ENCODE measurements at regions of chr10 and their contacts with region 1.

Region 1: DNA sequence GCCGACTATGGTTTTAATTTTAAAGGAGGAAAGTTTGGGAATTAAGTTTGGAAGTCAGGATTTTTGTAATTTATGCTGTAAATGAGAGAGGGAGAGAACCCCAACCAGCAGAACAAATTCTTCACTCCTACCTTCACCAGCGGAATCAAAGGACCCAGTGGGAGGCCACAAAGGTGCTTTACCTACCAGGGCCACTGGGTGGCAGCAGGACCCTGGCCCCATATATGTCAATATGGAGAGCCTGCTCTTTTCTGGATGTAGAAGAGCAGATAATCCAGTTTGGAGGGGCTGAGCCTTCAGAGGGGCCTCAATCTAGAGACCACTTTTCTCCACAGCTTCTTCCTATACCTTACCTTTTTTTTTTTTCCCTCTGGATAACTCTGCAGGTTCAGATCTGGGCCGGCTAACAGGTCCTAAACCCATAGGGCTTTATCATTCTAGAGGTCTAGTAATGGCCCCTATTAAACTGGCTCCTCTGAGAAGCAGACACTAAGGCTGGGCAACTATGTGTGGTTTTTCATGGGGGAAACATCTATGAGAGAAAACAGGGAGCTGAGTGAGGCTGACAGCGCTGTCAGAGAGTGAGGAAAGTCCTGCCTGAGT is 8.5 kb upstream of the SCD start:
- DNase-seq: peak; percentile 88
- ATAC-seq: peak; percentile 90
- H3K4me3 Mint-ChIP-seq: no peak overlapping the region
- H3K27ac Mint-ChIP-seq: peak overlapping the region; percentile 60
- H3K4me1 Mint-ChIP-seq: peaks cover 29% of the 10 kb centered on the region
- H3K27me3 Mint-ChIP-seq: peaks cover 9% of the 10 kb centered on the region

Region 2: DNA sequence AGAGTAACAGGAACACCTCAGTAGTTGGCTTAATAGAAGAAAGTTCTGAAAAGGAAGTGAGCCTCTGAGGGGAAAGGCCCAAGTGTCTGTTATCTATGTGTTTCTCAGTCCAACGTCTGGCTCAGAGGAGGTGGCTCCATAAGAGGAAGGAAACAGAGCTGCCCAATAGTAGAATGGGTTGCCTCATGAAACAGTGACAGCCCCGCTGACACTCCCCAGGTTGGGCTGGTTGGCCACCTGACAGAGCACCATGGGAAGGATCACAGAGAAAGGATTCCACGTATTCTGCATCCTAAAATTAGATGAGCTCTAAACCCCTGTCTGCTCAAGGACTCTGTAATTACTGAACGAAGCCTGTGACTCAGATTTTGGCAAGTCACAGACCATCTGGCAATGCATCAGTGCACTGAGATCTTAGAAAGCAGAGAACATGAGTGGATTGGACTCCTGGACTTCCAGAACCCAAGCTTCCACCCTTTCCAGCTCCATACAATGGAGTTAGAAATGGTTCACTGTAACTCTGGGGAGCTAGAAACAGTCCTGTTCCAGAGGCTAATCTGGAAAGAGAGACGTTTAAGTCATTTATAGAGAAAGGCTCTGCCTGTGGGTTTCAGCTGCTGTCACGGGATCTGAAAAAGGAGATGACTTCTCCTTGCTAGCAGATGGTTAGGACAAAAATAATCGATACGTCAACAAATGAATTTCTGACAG is 11.4 kb before region 1 on chr10:
- CTCF ChIA-PET with region 1: interaction called, 34 read pairs
- POLR2A ChIA-PET with region 1: interaction called, 5 read pairs
- DNase-seq: peak; percentile 58
- ATAC-seq: peak; percentile 91
- H3K4me3 Mint-ChIP-seq: no peak overlapping the region
- H3K27ac Mint-ChIP-seq: peak overlapping the region; percentile 72
- H3K4me1 Mint-ChIP-seq: peaks cover 13% of the 10 kb centered on the region
- H3K27me3 Mint-ChIP-seq: peaks cover 13% of the 10 kb centered on the region

Region 3: DNA sequence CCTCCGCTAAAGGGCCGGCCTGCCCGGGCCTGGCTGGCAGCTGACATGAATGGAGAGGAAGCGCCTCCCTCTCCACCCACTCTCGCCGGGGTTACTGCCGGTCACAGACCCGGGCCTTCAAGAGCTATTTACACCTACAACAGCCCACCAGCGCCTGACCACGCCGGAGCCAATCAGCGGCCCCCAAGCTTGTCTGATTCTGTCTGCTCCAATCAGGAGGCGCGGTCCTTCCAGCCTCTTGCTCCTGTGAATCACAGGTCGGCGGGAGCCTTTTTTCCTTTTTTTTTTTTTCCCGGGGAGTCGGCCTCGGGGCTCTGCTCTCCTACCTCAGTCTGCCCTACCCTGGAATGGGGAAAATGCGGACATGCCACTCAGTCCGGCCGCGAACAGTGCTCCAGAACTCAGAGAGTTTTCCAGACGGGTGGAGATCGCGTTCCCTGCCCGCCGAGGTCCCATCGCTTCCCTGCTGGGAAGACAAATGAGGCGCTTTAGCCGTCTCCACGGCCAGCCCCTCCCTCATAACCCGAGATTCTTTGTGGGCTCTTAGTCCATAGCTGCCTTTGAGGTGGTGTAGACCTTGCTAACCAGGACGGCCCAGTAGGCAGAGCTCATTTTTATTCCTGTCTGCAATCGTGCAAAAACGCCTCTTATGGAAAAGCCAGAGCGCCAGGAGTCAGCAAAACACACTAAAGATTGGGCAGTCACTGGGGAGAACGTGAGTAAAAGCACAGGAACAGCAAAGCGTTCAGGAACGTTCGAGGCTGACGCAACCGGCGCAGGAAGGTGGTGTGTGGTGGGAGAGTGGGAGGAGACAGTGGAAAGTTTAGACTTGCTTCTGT is 35.0 kb after region 1 on chr10:
- CTCF ChIA-PET with region 1: interaction called, 12 read pairs
- POLR2A ChIA-PET with region 1: interaction called, 8 read pairs
- DNase-seq: peak; percentile 96
- ATAC-seq: peak; percentile 83
- H3K4me3 Mint-ChIP-seq: no peak overlapping the region
- H3K27ac Mint-ChIP-seq: no peak overlapping the region
- H3K4me1 Mint-ChIP-seq: peaks cover 50% of the 10 kb centered on the region
- H3K27me3 Mint-ChIP-seq: no peaks in the 10 kb centered on the region

Region 4: GRCh38 chr10:100438674-100439315 is 100.3 kb after region 1 on chr10:
- CTCF ChIA-PET with region 1: interaction called, 311 read pairs
- POLR2A ChIA-PET with region 1: no interaction called
- DNase-seq: no peak
- ATAC-seq: no peak
- H3K4me3 Mint-ChIP-seq: no peak overlapping the region
- H3K27ac Mint-ChIP-seq: no peak overlapping the region
- H3K4me1 Mint-ChIP-seq: peaks cover 4% of the 10 kb centered on the region
- H3K27me3 Mint-ChIP-seq: no peaks in the 10 kb centered on the region